ENCODE measurements at regions of chr13 and their contacts with region 1.

Region 1: GRCh38 chr13:51814825-51815650 is 11.1 kb upstream of the DHRS12 start:
- DNase-seq: peak in 2 of 3 donors; percentile 51 to 78
- ATAC-seq: peak; percentile 60 to 64
- H3K4me3 ChIP-seq: no peak overlapping the region
- H3K27ac ChIP-seq: no peak overlapping the region
- H3K4me1 ChIP-seq: peaks cover 7% of the 10 kb centered on the region
- H3K27me3 ChIP-seq: no peaks in the 10 kb centered on the region

Region 2: GRCh38 chr13:51832471-51833152 is 17.6 kb after region 1 on chr13:
- intact Hi-C with region 1: loop called in 1 of 4 experiments (anchors 2 kb)
- DNase-seq: peak in 1 of 3 donors; percentile 44
- ATAC-seq: peak; percentile 82 to 88
- H3K4me3 ChIP-seq: no peak overlapping the region
- H3K27ac ChIP-seq: no peak overlapping the region
- H3K4me1 ChIP-seq: peaks cover 2% of the 10 kb centered on the region
- H3K27me3 ChIP-seq: no peaks in the 10 kb centered on the region

Measured in right cardiac atrium (tissue), 5 donors.